ENCODE measurements at regions of chr12 and their contacts with region 1.

Region 1: DNA sequence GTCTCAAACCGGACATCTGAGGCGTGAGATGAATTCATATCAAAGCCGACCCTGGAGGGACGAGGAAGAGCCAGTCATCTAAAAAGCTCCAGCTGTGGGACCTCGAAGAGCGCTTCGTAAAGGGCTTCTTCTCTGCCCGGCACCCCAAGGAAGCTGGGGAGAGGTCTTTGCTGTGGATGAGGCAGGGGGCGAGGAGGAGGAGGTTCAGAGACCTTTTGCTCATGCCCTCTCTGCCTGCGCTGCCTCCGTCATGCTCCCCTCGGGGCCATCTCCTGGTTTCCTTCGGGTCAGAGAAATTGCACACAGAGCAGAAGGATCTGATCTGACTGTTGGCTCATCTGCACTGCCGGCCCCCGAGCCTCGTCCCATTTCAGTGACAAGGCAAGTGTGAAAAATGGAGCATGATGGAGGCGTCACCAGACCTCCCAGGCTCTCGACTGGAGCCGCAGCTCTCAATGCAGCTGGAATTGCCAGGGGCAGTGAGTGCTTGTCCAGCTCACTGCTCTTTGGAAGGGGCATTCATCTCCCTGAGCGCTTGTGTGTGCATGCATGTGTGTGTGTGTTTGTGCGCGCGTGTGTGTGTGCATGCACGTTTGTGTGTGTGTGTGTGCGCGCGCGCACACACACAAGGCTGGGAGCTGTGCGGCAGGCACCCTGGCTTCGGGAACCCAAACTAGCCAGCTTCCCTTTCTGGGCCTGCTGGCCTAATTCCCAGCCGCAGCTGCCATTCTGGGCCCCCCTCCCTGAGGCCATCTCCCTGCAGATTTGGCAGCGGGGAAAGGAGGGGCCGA is 9.2 kb downstream of the CABP1 start:
- DNase-seq: peak; percentile 68
- H3K4me3 ChIP-seq: peak overlapping the region in 3 of 8 donors; percentile 11 to 54 (median 17)
- H3K27ac ChIP-seq: peak overlapping the region in 1 of 8 donors; percentile 15
- H3K4me1 ChIP-seq: peaks cover 9 to 38% (median 20%) of the 10 kb centered on the region in 6 donors
- H3K27me3 ChIP-seq: peaks cover 0 to 62% (median 10%) of the 10 kb centered on the region in 7 donors
- CTCF ChIP-seq: peak in 7 of 11 experiments; percentile 6 to 57 (median 32)
- POLR2A ChIP-seq: no peak

Region 2: DNA sequence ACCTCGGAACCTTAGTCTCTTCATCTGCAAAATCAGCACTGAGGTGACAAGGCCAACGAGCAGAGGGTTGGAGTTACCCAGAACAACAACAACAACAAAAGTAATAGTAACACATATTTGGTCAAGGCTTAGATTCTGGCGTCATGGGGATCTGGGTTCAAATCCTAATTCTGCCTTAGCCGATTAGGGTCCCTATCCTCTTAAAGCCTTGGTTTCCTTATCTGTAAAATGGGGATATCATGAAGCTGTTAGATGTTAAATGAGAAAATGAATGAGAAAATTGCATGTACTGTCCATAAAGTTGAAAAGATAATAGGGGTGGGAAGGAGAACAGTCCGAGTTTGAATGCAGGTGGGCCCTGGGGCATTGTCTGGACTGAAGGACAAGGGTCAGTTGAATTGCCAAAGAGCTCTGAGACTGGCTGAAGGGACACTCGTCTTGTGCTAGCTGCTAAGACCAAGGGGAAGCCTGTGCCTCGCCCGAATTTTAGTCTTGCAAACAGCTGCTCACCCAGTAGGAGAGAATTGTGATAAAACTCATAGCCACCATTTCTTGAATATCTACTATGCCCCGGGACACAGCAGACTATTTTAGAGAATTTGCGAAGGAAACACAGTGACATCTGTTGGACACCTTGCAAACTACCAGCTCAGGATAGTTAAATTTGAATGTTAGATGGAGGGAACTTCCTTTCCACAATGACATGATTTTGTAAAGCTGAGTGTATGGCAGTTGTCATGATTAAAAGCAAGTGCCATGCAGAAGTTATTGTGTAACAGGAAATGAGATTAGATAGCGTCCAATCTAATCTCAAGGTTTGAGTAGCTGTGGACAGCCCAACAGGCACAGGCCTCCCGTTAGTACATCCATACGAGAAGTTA is 321.9 kb after region 1 on chr12:
- intact Hi-C with region 1: loop called (anchors 5 kb)
- DNase-seq: no peak
- H3K4me3 ChIP-seq: no peak overlapping the region
- H3K27ac ChIP-seq: peak overlapping the region in 1 of 8 donors; percentile 17
- H3K4me1 ChIP-seq: peaks cover 0 to 16% (median 10%) of the 10 kb centered on the region in 6 donors
- H3K27me3 ChIP-seq: no peaks in the 10 kb centered on the region
- CTCF ChIP-seq: peak; percentile 59 to 90 (median 75)
- POLR2A ChIP-seq: no peak